ENCODE measurements at regions of chr3 and their contacts with region 1.

Region 1: GRCh38 chr3:101027286-101027685 is 34.1 kb upstream of the ABI3BP start:
- DNase-seq: no peak
- ATAC-seq: no peak
- H3K4me3 ChIP-seq: no peak overlapping the region
- H3K4me3 Mint-ChIP-seq: no peak overlapping the region
- H3K27ac ChIP-seq: no peak overlapping the region
- H3K27ac Mint-ChIP-seq: no peak overlapping the region
- H3K4me1 ChIP-seq: no peaks in the 10 kb centered on the region
- H3K4me1 Mint-ChIP-seq: no peaks in the 10 kb centered on the region
- H3K27me3 ChIP-seq: peaks cover 0 to 2% of the 10 kb centered on the region in 2 experiments
- H3K27me3 Mint-ChIP-seq: peaks cover 7 to 20% of the 10 kb centered on the region in 2 donors

Region 2: GRCh38 chr3:100982710-100983109 is 44.6 kb before region 1 on chr3:
- CTCF ChIA-PET with region 1: interaction called in 1 of 2 experiments, 10 read pairs
- POLR2A ChIA-PET with region 1: no interaction called
- DNase-seq: no peak
- ATAC-seq: no peak
- H3K4me3 ChIP-seq: no peak overlapping the region
- H3K4me3 Mint-ChIP-seq: no peak overlapping the region
- H3K27ac ChIP-seq: no peak overlapping the region
- H3K27ac Mint-ChIP-seq: no peak overlapping the region
- H3K4me1 ChIP-seq: no peaks in the 10 kb centered on the region
- H3K4me1 Mint-ChIP-seq: no peaks in the 10 kb centered on the region
- H3K27me3 ChIP-seq: no peaks in the 10 kb centered on the region
- H3K27me3 Mint-ChIP-seq: peaks cover 4 to 9% of the 10 kb centered on the region in 2 donors

Region 3: DNA sequence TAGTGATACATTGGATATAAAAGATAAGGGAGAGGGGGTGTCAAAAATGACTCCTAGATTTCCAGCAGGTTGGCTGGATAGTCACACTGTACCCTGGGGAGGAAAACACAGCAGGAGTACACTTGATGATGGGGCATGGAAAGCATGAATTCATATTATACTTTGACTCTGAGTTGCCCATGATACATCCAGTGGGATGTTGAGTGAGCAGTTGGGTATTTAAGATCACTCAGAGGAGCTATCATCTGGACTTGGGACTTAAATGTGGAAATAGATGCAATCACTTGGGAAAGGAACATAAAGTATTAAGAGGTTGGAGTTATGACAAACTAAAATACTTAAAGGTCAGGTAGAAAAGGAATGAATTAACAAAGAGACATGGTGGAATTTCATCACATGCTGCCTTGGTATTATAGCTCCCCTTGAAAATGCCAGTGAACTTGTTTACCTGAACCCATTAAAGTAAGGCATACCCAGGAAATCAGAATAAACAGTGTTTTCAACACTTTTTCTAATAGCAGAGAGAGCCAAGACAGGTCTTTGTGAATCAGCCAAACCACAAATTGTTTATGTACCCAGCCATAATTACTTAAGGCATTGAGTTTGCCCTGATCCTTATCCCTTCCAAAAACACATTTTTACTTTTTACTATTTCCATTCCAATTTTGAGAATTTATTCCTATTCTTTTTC is 15.9 kb after region 1 on chr3:
- CTCF ChIA-PET with region 1: no interaction called
- POLR2A ChIA-PET with region 1: no interaction called
- DNase-seq: no peak
- ATAC-seq: no peak
- H3K4me3 ChIP-seq: no peak overlapping the region
- H3K4me3 Mint-ChIP-seq: no peak overlapping the region
- H3K27ac ChIP-seq: no peak overlapping the region
- H3K27ac Mint-ChIP-seq: no peak overlapping the region
- H3K4me1 ChIP-seq: no peaks in the 10 kb centered on the region
- H3K4me1 Mint-ChIP-seq: no peaks in the 10 kb centered on the region
- H3K27me3 ChIP-seq: peaks cover 0 to 4% of the 10 kb centered on the region in 2 experiments
- H3K27me3 Mint-ChIP-seq: peaks cover 8 to 17% of the 10 kb centered on the region in 2 donors

Region 4: DNA sequence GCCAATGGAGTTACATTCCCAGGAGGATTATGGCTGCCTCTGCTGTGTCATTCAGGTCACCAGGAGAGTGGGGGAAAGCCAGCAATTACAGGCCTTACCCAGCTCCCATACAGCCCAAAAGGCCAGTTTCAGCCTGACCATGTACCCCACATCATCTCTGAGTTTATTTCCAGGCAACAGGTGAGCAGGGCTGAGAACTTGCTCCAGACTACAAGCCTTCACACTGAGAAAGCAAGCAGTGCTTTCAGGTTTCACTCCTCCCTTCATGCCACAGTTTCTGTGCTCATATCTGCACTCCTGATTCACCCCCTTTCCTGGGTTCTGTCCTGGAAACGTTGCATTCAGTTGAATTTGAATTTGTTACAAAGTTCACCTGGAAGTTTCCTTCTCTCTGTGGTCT is 34.0 kb after region 1 on chr3:
- CTCF ChIA-PET with region 1: no interaction called
- POLR2A ChIA-PET with region 1: interaction called in 1 of 2 experiments, 10 read pairs
- DNase-seq: no peak
- ATAC-seq: no peak
- H3K4me3 ChIP-seq: no peak overlapping the region
- H3K4me3 Mint-ChIP-seq: no peak overlapping the region
- H3K27ac ChIP-seq: no peak overlapping the region
- H3K27ac Mint-ChIP-seq: no peak overlapping the region
- H3K4me1 ChIP-seq: no peaks in the 10 kb centered on the region
- H3K4me1 Mint-ChIP-seq: no peaks in the 10 kb centered on the region
- H3K27me3 ChIP-seq: no peaks in the 10 kb centered on the region
- H3K27me3 Mint-ChIP-seq: peaks cover 30 to 34% of the 10 kb centered on the region in 2 donors

Measured in T-cell (primary cell).